PC-3 (cell line): ENCODE measurements at regions of chr3 and their contacts with region 1.

Region 1: DNA sequence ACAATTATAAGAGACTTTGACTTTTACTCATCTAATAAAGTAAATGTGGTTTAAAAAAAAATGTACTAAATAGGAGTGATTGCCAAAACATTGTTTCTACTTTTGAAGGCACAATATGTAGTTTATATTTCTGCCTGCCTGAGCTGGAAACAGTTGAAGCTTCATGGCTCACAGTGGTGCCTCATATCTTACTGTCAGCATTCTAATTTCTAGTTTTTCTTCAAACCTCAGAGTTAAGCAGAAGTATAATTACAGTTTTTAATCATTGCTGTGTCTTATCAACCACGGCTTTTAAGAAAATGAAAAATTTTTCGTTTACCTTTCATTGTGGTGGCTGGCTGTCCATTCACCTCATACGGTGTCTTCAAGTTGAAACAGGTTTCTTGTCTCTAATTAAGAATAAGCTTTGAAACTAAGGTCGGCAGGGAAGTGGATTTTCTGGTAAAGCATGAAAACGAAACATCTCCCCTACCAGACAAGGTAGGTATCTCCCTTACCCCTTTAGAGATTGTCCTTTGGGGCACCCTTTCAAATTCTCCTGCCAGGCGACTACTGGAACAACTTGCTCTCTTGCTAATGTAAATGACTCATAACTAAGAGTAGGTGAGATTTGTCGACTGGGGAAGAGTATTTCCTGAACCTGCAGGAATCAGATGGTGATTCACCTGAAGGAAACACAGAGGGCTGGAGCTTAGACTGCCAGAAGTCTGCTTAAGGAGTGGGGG is at the start of gene GPR87:
- DNase-seq: peak; percentile 95
- ATAC-seq: peak; percentile 75
- H3K4me3 ChIP-seq: peak within 1 kb of the TSS; percentile 72
- H3K27ac ChIP-seq: peak within 1 kb of the TSS; percentile 89
- H3K4me1 ChIP-seq: peaks cover 76% of the 10 kb centered on the region
- H3K27me3 ChIP-seq: no peaks in the 10 kb centered on the region
- CTCF ChIP-seq: no peak
- total RNA-seq, gene GPR87: 13.3 and 14.5 TPM in 2 replicates

Region 2: GRCh38 chr3:151909681-151910405 is 593.4 kb after region 1 on chr3:
- CTCF ChIA-PET with region 1: no interaction called
- POLR2A ChIA-PET with region 1: no interaction called
- intact Hi-C with region 1: loop called (anchors 5 kb)
- DNase-seq: peak; percentile 26
- ATAC-seq: no peak
- H3K4me3 ChIP-seq: no peak overlapping the region
- H3K27ac ChIP-seq: no peak overlapping the region
- H3K4me1 ChIP-seq: peaks cover 42% of the 10 kb centered on the region
- H3K27me3 ChIP-seq: no peaks in the 10 kb centered on the region
- CTCF ChIP-seq: no peak